OCI-LY7 (cell line): ENCODE measurements at regions of chr1 and their contacts with region 1.

Region 1: DNA sequence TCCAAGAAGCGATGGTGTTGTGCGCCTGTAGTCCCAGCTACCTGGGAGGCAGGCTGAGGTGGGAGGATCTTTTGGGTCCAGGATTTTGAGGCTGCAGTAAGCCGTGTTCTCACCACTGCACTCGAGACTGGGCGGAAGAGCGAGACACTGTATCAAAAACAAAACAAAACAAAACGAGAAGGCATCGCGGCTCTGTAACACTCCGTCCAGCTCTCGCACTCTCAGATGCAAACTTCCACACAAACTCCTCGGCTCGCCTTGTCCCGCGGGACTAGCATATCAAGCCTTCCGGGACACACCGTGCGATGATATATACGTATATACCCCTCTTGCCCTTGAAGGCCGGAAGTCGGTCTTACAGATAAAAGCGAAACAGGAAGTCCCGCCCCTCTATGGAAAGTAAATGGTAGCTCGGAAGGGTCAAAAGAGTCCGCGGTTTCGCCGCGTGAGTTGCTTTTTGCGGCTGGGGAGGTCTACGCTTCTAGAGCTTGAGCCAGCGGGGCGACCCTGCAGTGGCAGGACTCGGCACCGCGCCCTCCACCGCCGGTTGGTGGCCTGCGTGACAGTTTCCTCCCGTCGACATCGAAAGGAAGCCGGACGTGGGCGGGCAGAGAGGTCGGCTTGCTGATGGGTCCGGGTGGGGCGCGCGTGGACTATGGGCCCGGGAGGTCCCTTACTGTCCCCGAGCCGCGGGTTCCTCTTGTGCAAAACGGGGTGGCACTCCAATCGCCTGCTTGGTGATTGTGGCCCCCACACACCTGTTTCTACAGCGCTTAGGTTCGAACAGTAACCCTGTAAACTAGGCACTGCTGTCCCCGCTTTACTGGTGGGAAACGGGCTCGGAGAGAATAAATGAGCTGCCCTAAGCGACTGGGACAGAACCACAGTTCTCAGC is at the start of gene COA6:
- DNase-seq: peak; percentile 99
- H3K4me3 ChIP-seq: peak within 1 kb of the TSS; percentile 92
- H3K27ac ChIP-seq: peak within 1 kb of the TSS; percentile 95
- H3K4me1 ChIP-seq: peaks cover 35% of the 10 kb centered on the region
- CTCF ChIP-seq: peak; percentile 31; the same call in 1 of the 2 replicates
- total RNA-seq, gene COA6: 40.1 and 45.5 TPM in 2 replicates

Region 2: DNA sequence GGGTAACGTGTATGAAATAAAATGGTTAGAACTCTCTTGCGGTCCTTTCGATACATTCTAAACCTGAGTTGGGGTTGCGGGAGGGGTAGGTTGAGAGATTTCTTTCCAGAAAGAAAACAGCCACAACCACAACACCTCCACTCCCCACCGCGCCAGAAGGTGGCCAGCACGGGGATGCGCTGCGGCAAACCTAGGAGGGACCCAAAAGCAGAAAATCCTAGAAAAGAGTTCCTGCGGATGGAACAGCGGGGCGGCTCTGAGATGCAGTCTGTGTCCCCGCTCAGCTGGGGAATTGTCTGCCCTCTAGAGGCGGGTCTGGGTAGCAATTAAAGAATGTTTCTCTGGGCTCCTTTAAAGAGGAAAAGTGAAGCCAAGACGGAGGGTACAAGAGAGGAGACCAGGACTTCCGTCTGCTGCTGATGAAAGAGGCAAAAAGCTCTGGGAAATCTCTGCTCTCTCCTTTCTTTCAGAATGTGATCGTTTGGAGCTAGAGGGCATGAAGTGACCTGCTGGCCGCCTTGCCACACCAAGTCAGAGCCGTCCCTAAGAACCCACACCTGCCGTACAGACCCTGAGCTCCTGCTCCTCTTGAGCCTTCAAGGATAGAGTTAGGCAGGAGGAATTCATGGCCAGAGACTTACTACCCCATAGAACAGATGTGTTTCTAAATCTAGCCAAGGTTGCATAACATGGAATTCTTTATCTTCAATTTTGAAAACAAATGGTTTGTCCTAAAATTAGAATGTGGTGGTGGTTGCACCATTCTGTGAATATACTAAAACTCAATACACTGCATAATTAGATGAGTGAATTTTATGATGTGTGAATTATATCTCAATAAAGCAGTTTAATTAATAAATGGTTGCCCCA is 46.6 kb before region 1 on chr1:
- CTCF ChIA-PET with region 1: no interaction called
- POLR2A ChIA-PET with region 1: interaction called, 4 read pairs
- intact Hi-C with region 1: loop called (anchors 1 kb)
- DNase-seq: peak; percentile 58
- H3K4me3 ChIP-seq: no peak overlapping the region
- H3K27ac ChIP-seq: no peak overlapping the region
- H3K4me1 ChIP-seq: peaks cover 16% of the 10 kb centered on the region
- CTCF ChIP-seq: peak; percentile 89

Region 3: DNA sequence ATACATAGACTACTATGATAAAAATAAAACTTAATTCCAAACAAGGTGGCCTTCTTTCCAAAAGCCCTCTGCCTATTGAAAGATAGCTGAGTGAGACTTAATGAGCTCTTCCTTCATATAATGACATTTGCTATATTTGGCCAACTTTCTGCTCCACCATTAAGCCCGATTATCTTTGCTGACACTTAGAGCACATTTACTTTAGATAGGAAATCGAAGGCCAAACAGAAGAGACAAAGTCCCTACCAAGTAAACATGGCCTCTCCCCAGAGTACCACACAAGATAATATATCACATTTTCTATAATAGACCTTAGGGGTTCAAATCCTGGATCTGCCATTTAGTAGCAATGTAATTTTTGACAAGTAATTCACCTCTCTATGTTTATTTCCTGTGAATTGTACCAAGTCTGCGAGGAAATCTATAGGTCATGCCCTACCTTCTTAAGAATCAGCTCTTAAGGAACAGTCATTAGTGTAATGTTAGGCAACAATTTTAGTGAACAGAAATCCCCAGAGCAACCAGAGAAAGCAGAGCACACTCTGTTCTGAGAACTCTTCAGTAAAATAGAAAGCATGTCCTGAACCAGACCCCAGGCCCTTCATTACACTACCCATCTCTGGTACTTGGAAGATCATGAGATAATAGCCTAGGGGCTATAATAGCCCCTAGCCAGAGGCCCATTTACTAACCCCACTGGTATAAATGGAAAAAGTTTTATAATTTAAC is 17.4 kb before region 1 on chr1:
- CTCF ChIA-PET with region 1: no interaction called
- POLR2A ChIA-PET with region 1: interaction called, 35 read pairs
- intact Hi-C with region 1: loop called (anchors 1 kb)
- DNase-seq: no peak
- H3K4me3 ChIP-seq: peak overlapping the region; percentile 74
- H3K27ac ChIP-seq: no peak overlapping the region
- H3K4me1 ChIP-seq: peaks cover 22% of the 10 kb centered on the region
- CTCF ChIP-seq: no peak

Region 4: GRCh38 chr1:234361102-234361603 is 12.2 kb before region 1 on chr1:
- CTCF ChIA-PET with region 1: no interaction called
- POLR2A ChIA-PET with region 1: interaction called, 35 read pairs
- intact Hi-C with region 1: loop called (anchors 1 kb)
- DNase-seq: no peak
- H3K4me3 ChIP-seq: no peak overlapping the region
- H3K27ac ChIP-seq: no peak overlapping the region
- H3K4me1 ChIP-seq: peaks cover 20% of the 10 kb centered on the region
- CTCF ChIP-seq: no peak

Region 5: DNA sequence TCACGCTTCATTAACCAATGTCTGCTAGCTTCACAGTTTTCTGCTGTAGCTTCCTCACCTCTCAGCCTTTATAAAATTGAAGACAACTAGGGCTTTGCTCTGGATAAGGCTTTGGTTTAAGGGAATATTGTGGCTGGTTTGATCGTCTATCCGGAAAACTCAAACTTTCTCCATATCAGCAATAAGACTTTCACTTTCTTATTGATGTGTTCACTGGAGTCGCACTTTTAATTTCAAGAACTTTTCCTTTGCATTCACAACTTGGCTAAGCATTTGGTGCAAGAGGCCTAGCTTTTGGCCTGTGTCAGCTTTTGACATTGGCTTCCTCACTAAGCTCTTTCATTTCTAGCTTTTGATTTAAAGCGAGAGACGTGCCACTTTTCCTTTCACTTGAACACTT is 12.8 kb after region 1 on chr1:
- CTCF ChIA-PET with region 1: no interaction called
- POLR2A ChIA-PET with region 1: interaction called, 11 read pairs
- intact Hi-C with region 1: no loop called
- DNase-seq: no peak
- H3K4me3 ChIP-seq: no peak overlapping the region
- H3K27ac ChIP-seq: no peak overlapping the region
- H3K4me1 ChIP-seq: no peaks in the 10 kb centered on the region
- CTCF ChIP-seq: no peak

Region 6: DNA sequence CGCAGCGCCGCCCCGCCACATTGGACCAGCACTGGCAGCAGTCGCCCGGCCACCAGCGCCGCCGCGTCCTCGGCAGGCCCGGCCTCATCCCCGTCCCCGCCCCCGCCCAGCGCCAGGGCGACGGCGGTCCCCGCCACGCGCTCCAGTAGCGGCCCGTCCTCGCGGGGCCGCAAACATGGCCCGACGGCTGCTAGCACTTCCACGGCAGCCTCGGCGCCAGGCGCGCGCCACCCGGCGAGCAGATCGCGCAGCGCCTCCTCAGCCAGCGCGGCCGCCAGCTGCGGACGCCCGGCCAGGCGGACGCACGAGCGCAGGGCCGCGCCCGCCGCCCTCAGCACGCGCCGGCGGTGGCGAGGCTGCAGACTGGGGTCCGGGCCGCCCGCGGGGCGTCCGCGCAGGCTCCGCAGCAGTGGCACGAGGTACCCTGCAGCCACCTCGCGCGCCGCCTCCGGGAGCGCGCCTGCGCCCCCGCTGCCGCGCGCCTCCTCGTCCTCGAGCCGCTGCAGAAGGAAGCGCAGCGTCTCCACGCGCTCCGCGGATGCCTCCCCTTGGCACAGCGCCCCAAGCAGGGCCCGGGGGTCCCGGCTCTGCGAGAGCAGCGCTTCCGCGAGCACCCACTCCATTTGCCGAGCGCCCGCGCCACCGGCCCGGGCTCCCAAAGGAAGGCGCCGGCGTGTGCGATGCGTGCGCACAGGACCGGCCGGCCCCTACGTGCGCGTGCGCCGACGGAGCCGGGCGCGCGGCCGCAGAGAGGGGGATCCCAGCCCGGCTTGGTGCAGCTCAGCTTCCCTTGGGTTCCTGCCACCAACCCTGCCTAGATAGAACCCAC is 105.4 kb after region 1 on chr1 and contains the start of gene TARBP1:
- CTCF ChIA-PET with region 1: no interaction called
- POLR2A ChIA-PET with region 1: interaction called, 3 read pairs
- intact Hi-C with region 1: loop called (anchors 1 kb)
- DNase-seq: peak; percentile 90
- H3K4me3 ChIP-seq: peak within 1 kb of the TSS; percentile 72
- H3K27ac ChIP-seq: peak within 1 kb of the TSS; percentile 81
- H3K4me1 ChIP-seq: peaks cover 49% of the 10 kb centered on the region
- CTCF ChIP-seq: 0 out of 2 replicates have a peak, but pooled peaks have one; percentile 13
- total RNA-seq, gene TARBP1: 30.0 and 30.5 TPM in 2 replicates

Region 7: DNA sequence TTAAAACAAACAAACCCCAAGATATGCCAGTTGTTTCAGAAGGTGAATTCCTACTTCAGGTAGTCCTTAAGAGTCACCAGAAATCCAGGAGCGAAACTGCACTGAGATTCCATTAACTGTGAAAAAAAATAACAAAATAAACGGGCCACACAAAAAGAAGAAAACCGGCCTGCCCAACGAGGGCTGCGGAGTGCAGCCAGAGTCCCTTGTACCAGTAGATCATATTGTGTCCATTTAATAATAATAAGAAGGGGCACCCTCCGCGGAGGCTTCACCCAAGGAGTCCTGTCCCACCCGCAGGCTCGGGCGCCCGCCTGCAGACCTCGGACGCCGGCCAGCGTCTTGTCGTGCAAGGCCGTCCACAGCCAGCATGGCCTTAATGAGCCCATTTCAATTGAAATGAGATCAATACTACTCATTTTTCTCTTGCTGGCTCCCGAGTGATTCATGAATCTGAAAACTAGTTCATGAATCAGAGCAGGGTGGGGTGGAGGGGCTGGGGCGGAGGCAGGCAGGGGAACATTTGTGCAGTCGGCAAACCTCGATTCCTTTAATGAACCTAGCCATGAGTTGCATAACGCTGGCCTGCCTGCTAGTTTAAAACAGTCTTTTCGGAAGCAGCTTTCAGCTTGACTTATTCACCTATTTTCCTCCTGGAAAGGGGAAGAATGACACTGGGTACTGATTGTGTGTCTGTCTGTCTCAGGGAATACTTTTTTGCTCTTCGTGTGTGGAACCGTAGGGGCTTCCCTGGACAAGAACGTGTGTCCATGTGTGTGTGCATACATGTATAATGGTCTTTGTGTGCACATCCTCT is 349.8 kb after region 1 on chr1:
- CTCF ChIA-PET with region 1: no interaction called
- POLR2A ChIA-PET with region 1: no interaction called
- intact Hi-C with region 1: no loop called
- DNase-seq: peak; percentile 10
- H3K4me3 ChIP-seq: peak overlapping the region; percentile 27
- H3K27ac ChIP-seq: peak overlapping the region; percentile 65
- H3K4me1 ChIP-seq: peaks cover 50% of the 10 kb centered on the region
- CTCF ChIP-seq: no peak